ENCODE measurements at regions of chr2 and their contacts with region 1.

Region 1: DNA sequence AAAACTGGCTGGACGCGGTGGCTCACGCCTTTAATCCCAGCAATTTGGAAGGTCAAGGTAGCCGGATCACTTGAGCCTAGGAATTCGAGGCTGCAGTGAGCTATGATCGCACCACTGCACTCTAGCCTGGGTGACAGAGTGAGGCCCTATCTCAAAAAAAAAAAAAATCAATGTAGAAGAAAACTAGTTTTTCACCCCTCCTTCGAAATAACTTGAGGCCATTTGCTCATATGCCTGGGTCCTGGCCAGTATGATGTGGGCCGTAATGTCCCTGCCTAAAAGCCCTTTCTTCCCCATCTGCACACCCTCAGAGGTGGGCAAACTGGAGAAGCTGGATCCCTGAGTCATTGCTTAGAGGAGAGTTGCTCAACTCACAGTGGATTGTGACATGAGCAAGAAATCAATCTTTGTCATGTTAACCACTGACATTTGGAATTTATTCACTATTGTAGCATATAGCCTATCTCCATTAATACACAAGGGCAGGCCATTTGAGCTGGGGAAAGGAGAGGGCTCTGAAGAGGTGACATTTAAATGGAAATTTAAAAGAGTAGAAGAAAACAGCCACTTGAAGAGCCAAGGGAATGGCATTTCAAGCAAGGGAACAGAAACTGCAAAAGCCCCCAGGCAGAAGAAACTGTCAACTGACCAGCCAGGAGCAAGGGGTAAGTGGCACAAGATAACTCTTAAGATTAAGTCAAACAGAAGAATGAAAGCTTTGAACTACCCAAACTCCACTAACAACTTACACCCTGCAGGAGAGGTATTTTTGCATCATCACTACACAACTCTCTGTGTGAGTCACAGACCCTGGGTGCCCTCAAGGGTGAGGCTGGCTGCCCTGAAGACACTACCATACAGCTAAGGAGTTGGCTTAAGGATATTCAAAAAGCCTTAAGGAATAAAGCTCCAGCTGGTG is 7.6 kb upstream of the METTL21A start:
- DNase-seq: peak; percentile 92
- H3K4me3 Mint-ChIP-seq: peak overlapping the region; percentile 47
- H3K27ac Mint-ChIP-seq: peak overlapping the region; percentile 61
- H3K4me1 Mint-ChIP-seq: peaks cover 35% of the 10 kb centered on the region
- H3K27me3 Mint-ChIP-seq: no peaks in the 10 kb centered on the region
- CTCF ChIP-seq: no peak

Region 2: DNA sequence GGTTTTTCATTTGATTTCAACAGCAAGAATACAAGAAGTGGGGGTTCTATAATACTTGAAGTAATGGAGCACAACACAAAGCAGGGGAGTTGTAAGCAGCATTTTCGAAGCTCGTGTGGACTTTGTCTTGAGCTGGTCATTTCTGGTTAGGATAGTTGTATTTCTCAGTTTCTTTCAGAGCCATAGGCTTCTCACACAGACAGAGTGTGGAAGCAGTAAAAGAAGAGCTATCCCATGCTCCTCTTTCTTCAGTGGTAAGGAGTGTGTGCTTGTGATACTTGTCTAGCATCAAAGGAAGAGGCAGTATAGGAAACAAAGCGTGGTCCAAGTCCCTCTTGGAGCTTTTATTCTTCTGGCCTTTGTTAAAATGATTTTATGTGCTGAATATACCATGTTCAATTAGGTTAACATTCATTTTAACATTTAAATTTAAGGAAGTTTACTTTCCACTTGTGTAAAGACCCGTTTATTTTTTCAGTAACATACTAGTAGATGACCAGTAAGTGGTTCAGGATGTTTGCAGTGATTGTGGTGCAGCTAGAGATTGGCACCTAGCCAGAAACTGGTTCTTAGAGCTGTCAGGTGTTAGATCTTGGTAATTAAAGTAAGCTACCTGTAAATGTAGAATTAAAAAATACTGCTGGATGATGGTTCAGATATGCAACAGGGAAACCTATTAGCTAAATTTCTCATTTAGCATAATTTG is 93.2 kb after region 1 on chr2:
- CTCF ChIA-PET with region 1: interaction called, 47 read pairs
- POLR2A ChIA-PET with region 1: interaction called, 40 read pairs
- intact Hi-C with region 1: no loop called
- DNase-seq: peak; percentile 31
- H3K4me3 Mint-ChIP-seq: no peak overlapping the region
- H3K27ac Mint-ChIP-seq: peak overlapping the region; percentile 28
- H3K4me1 Mint-ChIP-seq: peaks cover 25% of the 10 kb centered on the region
- H3K27me3 Mint-ChIP-seq: no peaks in the 10 kb centered on the region
- CTCF ChIP-seq: no peak

Region 3: DNA sequence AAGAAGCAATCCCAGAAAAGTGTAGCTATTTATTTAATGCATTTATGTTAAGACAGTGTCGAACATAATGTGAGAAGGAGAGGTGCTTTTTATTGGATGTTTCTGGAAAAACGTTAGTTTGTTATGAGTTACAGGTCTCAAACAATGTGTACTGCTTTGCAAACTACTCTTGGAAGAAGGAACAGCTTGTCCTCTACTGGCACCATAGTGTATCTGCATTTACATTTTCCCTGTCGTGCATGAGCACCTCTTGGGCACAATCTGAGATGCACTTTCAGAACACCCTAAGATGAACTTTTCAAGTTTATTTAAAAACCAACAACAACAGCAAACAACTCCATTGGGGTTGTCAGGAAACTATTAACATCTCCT is 101.4 kb after region 1 on chr2:
- CTCF ChIA-PET with region 1: interaction called, 47 read pairs
- POLR2A ChIA-PET with region 1: interaction called, 5 read pairs
- intact Hi-C with region 1: no loop called
- DNase-seq: peak; percentile 43
- H3K4me3 Mint-ChIP-seq: no peak overlapping the region
- H3K27ac Mint-ChIP-seq: no peak overlapping the region
- H3K4me1 Mint-ChIP-seq: peaks cover 5% of the 10 kb centered on the region
- H3K27me3 Mint-ChIP-seq: no peaks in the 10 kb centered on the region
- CTCF ChIP-seq: peak; percentile 26

Region 4: DNA sequence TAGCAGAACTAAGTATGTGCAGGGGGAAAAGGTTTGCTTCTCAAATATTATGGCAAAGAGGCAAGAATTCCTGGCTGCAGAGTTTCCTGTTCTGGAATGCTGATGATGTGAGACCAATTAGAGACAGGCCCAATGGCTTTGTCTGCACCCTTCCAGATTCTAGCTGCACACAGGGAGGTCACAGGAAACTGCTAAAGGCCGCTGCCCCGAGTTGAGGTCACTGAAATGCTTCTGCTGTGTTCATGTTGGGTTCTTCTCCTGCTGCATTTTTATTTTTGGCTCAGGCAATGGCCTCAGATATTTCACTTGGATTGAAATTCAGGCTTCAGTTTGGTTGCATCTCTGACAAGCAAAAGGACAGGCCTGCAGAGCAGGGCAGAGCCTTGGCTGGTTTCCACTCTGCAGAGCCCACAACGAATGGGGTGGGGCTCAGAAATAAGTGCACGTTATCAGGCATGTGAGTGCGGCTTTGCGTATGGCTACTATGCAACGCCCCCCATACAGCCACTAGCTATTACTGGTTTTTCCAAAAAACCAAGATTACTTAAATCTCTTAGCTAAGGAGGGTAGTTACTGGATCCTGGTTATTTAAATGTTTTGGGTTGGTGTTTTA is 203.8 kb after region 1 on chr2:
- CTCF ChIA-PET with region 1: no interaction called
- POLR2A ChIA-PET with region 1: no interaction called
- intact Hi-C with region 1: no loop called
- DNase-seq: no peak
- H3K4me3 Mint-ChIP-seq: no peak overlapping the region
- H3K27ac Mint-ChIP-seq: no peak overlapping the region
- H3K4me1 Mint-ChIP-seq: no peaks in the 10 kb centered on the region
- H3K27me3 Mint-ChIP-seq: no peaks in the 10 kb centered on the region
- CTCF ChIP-seq: no peak

Measured in MCF 10A (cell line).